Sciatic nerve (tissue), 2 donors: ENCODE measurements at regions of chr7 and their contacts with region 1.

Region 1: DNA sequence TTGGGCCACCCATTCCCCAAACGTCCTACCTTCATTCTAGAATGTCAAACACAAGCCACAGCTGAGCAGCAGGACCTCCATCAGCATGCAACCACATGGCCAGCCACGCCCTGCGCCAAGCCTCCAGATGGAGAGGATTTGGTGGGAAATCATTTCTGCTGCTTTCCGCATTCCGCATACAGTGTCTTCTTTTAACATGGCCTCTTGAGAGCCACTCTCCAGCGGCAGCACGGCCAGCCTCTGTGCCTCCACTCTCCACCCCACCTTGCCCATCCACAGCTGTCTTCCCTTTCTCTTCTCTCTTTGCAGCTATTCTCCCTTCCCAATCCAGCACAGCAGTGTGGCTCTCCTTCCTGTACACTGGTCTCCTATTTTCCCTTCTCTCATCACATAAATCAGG is 389.1 kb downstream of the PAXIP1 start:
- DNase-seq: no peak
- ATAC-seq: no peak

Region 2: DNA sequence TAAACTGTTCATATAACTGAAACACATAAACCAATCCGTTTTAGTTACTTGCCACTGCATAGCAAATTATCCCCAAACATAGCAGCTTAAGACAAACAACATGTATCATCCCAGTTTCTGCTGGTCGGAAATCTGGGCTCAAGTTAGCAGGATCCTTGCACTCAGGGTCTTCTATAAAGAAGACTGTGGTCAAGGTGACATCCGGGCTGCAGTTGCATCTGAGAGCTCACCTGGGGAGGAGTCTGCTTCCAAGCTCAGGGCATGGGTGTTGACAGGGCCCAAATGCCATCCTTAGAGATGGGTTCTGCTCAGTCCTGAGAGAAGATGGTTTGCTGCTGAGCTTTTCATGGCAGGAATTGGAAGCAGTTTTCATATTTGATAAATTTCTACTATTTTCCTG is 42.0 kb before region 1 on chr7:
- intact Hi-C with region 1: loop called (anchors 1 kb)
- DNase-seq: no peak
- ATAC-seq: no peak

Region 3: GRCh38 chr7:154640266-154640865 is 26.6 kb after region 1 on chr7:
- intact Hi-C with region 1: no loop called
- DNase-seq: no peak
- ATAC-seq: no peak

Region 4: GRCh38 chr7:154684666-154685563 is 71.1 kb after region 1 on chr7:
- intact Hi-C with region 1: no loop called
- DNase-seq: no peak
- ATAC-seq: no peak